Right ventricle myocardium superior (tissue), 1 donor: ENCODE measurements at regions of chr17 and their contacts with region 1.

Region 1: GRCh38 chr17:35747540-35748017 is 5.5 kb downstream of the GAS2L2 start:
- DNase-seq: peak; percentile 78
- ATAC-seq: peak; percentile 88

Region 2: DNA sequence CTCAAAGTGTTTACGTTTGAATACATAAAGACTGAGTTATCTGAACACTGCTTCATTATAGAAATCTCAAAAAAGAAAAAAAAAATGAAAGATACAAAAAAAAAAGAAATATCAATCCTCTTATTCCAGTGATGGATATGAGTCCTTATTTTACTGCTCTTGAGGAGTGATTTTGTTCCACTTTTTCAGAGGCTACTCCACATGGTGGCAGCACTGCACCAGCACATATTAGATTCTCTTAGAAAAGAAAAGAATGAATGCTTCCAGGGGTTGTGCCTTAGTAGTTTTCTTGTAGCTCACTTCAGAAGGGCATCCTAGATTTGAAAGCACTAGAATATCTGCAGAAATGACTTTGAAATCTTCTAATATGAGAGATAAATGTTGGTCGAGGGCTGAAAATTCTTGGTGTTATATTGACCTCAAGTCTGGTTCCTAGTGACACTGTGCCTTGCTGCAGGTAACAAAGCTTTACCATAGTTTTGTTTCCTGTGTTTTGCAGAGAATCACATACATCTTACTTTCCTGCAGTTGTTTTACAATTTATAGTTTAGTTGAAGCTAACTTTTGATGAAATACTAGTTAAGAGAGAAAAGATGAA is 134.6 kb before region 1 on chr17:
- intact Hi-C with region 1: loop called (anchors 2 kb)
- DNase-seq: peak; percentile 55
- ATAC-seq: peak; percentile 50

Region 3: GRCh38 chr17:35660902-35661301 is 86.7 kb before region 1 on chr17:
- intact Hi-C with region 1: loop called (anchors 5 kb)
- DNase-seq: no peak
- ATAC-seq: peak; percentile 92

Region 4: DNA sequence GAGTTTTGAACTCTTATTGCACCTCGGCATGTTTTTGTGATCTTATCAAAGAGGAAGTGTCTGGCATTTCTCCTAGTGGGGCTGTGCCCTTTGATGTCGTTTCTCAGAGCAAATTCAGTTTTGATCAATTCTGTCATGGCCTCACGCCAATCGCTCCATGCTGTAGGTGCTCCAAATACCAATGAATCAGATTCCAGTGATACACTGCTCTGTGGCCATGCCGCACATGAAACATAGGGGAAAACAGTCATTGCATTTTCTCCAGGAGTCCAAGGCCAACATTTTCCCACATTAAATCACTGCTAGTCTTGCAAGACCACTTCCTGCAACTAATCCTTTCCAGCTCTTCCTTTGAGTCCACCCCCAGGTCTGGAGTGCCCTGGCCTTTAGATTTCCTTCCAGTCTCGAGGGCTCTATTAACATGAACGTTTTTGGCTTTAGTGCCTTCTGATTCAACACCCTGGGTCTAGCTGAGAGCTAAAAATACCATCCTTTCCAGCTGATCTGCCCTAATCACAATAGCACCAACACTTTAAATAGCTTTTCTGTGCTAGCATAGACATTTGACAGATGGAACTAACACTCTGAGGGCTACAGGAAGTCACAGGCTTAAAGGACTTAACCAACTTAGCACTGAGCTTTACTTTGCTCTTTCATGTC is 34.4 kb before region 1 on chr17:
- intact Hi-C with region 1: no loop called
- DNase-seq: no peak
- ATAC-seq: peak; percentile 85

Region 5: GRCh38 chr17:35794988-35795824 is 47.6 kb after region 1 on chr17 and contains the start of gene MMP28:
- intact Hi-C with region 1: no loop called
- DNase-seq: peak; percentile 73
- ATAC-seq: peak; percentile 73
- total RNA-seq, gene MMP28: 1.2 TPM

Region 6: DNA sequence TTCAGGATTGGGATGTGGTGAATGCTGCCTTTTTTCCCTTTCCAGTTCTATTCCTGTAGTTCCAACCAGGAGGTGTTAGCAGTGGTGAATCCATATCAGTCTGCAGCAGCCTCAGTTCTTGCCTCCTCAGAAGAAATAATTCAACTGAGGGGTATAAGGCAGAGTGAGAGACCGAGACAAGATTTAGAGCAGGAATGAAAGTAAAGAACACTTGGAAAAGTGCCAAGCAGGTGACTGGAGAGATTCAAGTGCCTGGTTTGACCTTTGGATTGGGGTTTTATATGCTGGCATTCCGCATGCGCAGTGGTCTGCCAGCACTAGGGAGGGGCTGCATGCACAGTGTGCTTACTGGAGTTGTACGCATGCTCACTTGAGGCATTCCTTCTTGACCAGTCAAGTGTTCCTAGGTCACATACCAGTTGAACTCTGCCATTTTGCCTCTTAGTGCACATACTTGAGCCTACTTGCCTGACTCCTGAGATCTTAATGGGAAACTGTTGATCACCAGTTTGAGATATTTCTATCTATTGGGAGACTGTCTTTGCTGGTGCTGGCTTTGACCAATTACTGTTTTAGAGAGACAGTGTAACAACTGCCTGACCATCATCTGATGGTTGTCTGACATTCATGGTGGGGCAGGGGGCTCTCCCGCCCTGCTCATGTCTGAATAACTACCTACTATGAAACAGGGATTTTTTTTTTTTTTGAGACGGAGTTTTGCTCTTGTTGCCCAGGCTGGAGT is 254.5 kb after region 1 on chr17:
- intact Hi-C with region 1: no loop called
- DNase-seq: no peak
- ATAC-seq: no peak